ENCODE measurements at regions of chr12 and their contacts with region 1.

Region 1: DNA sequence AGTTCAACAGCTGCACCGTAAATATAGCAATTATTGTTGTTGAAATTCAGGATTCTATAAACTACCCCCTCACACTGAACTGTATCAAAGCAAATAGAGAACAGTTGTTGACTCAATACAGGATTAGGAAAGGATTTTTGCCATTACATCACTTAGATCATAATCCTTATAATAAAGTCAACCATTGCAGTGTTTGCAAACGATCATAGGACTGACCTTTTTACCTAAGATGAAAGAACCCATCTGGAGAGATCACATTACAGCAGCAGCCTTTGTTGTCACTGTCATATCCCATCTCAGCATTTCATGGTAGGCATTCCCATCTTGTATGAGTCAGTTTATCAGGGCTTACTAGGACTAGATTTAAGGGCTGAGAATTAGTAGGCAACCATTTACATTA is 96.1 kb downstream of the IPO8 start:
- DNase-seq: no peak

Region 2: GRCh38 chr12:30440826-30441602 is 158.6 kb before region 1 on chr12:
- intact Hi-C with region 1: no loop called
- DNase-seq: no peak

Region 3: DNA sequence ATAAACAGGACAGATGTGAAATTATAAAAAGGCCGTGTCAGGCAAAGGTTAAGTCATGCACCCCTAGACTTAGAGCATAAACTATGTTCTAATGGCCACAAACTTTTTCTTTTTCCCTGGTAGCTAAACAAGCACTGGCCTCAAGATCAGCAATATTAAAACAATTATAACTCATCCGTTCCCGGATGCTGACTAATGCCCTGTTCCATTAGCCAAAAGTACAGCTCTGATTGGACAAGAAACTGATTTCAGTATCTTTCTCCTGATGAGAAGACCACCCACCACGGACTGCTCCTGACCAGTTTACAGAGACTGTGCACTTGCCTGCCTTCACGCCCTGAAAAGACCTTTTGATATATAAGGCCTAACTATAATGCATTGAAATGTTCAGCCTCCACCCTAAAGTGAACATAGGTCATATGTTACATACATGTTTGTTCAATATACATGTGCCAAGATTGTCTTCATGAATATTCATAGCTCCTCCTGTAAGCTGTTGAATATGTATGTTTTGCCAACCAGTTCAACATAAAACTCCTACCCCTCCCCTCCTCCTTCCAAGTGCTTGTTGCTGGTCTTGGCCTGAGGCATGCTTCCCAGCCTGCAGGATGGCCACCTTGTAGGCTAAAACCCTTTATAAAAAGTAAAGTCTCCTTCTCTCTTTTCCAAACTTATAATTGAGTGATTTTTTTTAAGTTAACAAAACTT is 65.9 kb before region 1 on chr12:
- intact Hi-C with region 1: loop called in 1 of 2 experiments (anchors 2 kb)
- DNase-seq: no peak

Measured in posterior vena cava (tissue), 2 donors.